ENCODE measurements at regions of chr20 and their contacts with region 1.

Region 1: DNA sequence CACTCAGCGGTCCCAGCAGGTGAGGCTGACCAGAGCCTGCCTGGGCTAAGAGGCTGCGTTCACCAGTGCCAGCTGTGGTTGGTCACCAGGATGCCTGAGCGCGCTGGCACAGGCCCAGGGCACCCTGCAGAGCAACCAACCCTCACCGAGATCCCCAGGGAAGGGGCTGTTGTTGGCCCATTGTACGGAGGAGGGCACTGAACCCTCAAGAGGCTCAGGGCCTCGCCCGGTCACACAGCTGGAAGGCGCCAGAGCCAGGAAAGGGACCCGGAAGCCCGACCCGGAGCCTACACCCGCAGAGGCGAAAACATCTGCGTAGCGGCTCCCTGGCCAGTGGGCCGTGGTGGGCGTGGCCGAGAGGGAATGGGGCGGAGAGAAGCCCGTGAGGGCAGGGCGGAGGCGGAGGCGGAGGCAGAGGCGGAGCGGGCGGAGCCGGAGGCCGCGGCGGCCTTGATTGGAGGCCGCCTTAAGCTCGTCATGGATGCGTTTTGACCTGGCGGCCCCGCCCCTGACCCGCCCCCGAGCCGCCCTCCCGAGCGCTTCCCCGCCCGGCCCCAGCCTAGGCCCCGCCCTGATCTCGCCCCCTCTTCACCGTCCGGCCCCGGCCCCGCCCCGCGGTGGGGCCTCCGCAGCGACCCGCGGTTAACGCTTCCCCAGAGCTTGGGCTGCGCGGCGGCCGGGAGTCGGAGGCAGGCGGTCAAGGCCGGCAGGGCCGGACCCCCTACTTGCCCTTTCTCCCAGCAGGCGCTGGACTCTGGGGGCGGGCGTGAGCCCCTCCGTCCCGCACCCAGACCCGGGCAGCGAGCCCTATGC is 2.2 kb upstream of the MRGBP start:
- DNase-seq: peak; percentile 96
- H3K4me3 ChIP-seq: peak overlapping the region; percentile 4 to 60 (median 43)
- H3K27ac ChIP-seq: peak overlapping the region; percentile 72
- H3K4me1 ChIP-seq: peaks cover 22% of the 10 kb centered on the region
- H3K27me3 ChIP-seq: no peaks in the 10 kb centered on the region
- CTCF ChIP-seq: no peak
- POLR2A ChIP-seq: peak; percentile 89

Region 2: DNA sequence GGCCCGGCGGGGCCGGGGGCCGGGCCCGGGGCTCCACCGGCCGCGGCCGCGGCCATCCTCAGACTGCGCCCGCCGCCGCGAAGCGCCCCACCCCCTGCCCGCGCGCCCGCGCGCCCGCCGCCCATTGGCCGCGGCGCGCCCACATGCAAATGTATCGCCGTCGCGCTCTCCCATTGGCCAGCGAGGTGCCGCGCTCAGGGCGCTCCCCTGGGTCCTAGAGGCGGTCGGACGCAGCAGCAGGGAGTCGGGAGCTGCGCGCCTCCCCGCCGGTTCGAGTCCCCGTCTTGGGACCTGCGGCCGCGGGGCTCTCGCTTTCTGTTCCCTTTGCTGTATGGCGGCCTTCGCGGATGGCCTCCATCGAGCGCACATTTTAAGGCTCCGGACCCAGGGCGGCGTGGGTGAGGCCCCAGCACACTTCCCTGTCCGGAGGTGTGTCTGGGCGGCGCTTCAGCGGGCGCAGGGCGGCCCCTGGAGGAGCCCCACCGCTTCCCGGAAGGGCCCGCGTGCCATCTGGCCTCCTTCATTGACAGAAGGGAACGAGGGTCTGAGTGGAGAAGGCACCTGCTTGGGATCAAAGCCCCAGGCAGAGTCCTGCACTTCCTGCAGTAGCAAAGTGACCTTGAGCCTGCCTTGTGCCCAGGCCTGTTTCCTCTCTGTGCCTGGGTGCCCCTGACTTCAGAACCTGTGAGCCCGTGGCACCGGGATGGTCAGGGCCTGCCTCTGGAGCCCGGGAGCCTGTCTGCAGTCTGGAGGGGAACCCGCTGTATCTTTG is 386.7 kb before region 1 on chr20 and contains the start of gene CABLES2:
- CTCF ChIA-PET with region 1: interaction called, 11 read pairs
- POLR2A ChIA-PET with region 1: no interaction called
- dilution Hi-C with region 1: no loop called
- intact Hi-C with region 1: no loop called
- DNase-seq: peak; percentile 89
- H3K4me3 ChIP-seq: peak within 1 kb of the TSS in 2 of 3 experiments; percentile 17 to 68
- H3K27ac ChIP-seq: no peak within 1 kb of the TSS
- H3K4me1 ChIP-seq: peaks cover 11% of the 10 kb centered on the region
- H3K27me3 ChIP-seq: no peaks in the 10 kb centered on the region
- CTCF ChIP-seq: no peak
- POLR2A ChIP-seq: no peak
- total RNA-seq, gene CABLES2: 9.9 TPM in 2 replicates

Region 3: DNA sequence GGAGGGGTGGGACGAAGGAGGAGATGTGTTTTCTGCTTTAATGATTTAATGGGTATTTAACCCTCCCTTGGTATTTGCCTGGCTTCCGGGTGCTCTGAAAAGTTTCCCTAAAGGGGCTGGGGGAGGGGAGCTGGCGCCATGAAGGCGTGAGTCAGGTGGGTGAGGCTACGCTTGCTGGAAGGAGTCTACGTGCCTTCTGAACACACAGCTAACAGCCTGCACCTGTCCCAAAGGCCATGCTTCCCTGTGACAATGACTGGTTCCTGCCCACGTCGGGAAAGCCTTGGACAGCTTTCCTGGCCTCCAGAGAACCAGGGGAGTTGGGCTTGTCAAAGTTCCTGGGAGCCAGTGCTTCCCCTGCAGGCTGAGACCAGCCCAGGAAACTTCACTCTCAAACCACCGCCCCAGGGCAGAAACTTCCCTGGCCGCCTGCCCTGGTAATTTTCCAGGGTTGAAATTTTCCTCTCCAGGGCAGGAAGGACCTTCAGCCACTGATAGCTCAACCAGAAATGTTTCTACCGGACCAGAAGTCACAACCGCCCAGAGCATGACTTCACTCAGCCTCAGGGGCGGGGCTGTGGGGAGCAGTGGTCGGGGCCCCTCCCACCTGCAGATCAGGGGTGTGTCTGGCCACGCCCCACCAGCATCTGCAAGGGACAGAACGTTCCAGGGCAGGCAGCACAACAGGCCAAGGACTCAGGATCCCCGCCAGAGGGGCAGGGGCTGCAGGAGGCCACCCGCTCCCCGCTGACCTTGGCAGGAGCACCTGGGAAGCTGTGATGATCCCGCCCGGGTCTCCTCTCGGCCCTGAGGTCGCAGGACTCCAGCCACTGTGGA is 170.4 kb before region 1 on chr20:
- CTCF ChIA-PET with region 1: interaction called, 5 read pairs
- POLR2A ChIA-PET with region 1: no interaction called
- dilution Hi-C with region 1: no loop called
- intact Hi-C with region 1: loop called (anchors 1 kb)
- DNase-seq: peak; percentile 93
- H3K4me3 ChIP-seq: peak overlapping the region in 1 of 3 experiments; percentile 1
- H3K27ac ChIP-seq: peak overlapping the region; percentile 85
- H3K4me1 ChIP-seq: peaks cover 23% of the 10 kb centered on the region
- H3K27me3 ChIP-seq: no peaks in the 10 kb centered on the region
- CTCF ChIP-seq: no peak
- POLR2A ChIP-seq: peak; percentile 81

Region 4: DNA sequence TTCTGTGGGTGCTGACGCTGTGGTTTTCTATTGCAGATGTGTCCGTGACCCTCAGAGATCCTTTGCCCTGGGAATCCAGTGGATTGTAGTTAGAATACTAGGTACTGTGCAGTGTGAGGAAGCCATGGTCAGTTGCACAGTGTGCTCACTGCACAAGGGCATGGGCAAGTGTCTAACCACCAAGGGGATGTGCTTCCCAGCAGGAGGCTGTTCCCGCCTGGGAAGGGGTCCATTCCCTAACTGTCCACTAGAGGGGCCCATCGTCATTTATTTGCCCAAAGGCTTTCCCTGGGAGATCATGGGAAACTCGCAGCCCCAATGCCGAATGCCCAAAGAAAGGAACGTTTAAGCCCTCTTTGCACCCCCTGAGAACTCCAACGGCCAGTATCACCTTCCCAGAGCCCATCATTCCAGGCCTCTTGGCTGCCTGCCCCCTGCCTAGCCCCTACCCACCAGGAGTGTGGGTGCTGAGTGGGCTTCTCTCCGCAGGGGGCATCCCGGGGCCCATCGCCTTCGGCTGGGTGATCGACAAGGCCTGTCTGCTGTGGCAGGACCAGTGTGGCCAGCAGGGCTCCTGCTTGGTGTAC is 125.6 kb before region 1 on chr20:
- CTCF ChIA-PET with region 1: interaction called, 120 read pairs
- POLR2A ChIA-PET with region 1: no interaction called
- dilution Hi-C with region 1: no loop called
- intact Hi-C with region 1: loop called (anchors 1 kb)
- DNase-seq: peak; percentile 76
- H3K4me3 ChIP-seq: no peak overlapping the region
- H3K27ac ChIP-seq: no peak overlapping the region
- H3K4me1 ChIP-seq: peaks cover 13% of the 10 kb centered on the region
- H3K27me3 ChIP-seq: no peaks in the 10 kb centered on the region
- CTCF ChIP-seq: peak; percentile 87 to 91
- POLR2A ChIP-seq: no peak

Region 5: GRCh38 chr20:62723351-62723750 is 70.8 kb before region 1 on chr20:
- CTCF ChIA-PET with region 1: interaction called, 18 read pairs
- POLR2A ChIA-PET with region 1: no interaction called
- dilution Hi-C with region 1: no loop called
- intact Hi-C with region 1: no loop called
- DNase-seq: peak; percentile 50
- H3K4me3 ChIP-seq: no peak overlapping the region
- H3K27ac ChIP-seq: no peak overlapping the region
- H3K4me1 ChIP-seq: no peaks in the 10 kb centered on the region
- H3K27me3 ChIP-seq: peaks cover 0 to 30% of the 10 kb centered on the region in 2 experiments
- CTCF ChIP-seq: no peak
- POLR2A ChIP-seq: no peak

Region 6: GRCh38 chr20:62808211-62808865 is 14.2 kb after region 1 on chr20:
- CTCF ChIA-PET with region 1: interaction called, 22 read pairs
- POLR2A ChIA-PET with region 1: no interaction called
- dilution Hi-C with region 1: no loop called
- intact Hi-C with region 1: loop called (anchors 1 kb)
- DNase-seq: peak; percentile 44
- H3K4me3 ChIP-seq: no peak overlapping the region
- H3K27ac ChIP-seq: no peak overlapping the region
- H3K4me1 ChIP-seq: peaks cover 11% of the 10 kb centered on the region
- H3K27me3 ChIP-seq: no peaks in the 10 kb centered on the region
- CTCF ChIP-seq: peak; percentile 78 to 93
- POLR2A ChIP-seq: no peak